ENCODE measurements at regions of chr9 and their contacts with region 1.

Region 1: GRCh38 chr9:26326473-26327044 is 566.0 kb downstream of the CAAP1 start:
- DNase-seq: no peak

Region 2: DNA sequence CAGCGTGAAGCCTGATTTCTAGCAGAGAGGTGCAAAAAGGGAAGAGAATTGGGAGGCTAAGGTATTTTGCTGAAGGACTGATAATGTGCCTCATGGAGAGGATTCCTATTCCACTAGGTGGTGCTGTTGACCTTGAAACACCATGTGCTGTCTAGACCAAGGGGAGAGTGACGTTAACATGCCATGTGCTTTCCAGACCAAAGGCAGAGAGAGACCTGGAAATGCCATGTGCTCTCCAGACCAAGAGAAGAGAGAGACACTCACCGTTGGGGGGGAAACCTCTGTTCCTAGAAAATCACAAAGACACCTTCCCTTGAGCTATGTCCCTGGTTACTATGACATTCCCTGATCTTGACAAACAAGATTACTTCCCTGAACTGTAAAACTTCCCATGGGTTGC is 362.3 kb before region 1 on chr9:
- intact Hi-C with region 1: loop called (anchors 10 kb)
- DNase-seq: no peak

Region 3: GRCh38 chr9:26341545-26341944 is 15.0 kb after region 1 on chr9:
- intact Hi-C with region 1: no loop called
- DNase-seq: no peak

Region 4: DNA sequence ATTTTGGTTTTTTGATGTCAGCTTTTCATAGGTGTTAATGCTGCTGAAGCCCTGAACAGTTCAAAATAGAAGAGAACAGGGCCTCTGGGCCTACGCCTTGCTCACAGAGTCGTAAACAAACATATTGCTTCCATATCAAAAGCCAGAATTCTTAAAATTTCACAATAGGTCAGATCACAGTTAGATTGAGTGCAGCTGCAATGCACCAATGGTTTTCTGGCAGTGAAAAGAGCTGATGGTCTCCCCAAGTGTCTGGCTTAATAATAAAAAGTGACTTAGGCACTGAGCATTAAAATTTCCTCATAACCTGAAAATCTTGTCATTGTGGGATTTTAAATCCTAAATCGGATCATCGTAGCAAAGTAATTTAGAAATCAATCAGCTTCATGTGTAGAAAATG is 73.0 kb after region 1 on chr9:
- intact Hi-C with region 1: loop called (anchors 10 kb)
- DNase-seq: no peak